Activated CD8-positive, alpha-beta memory T cell treated with anti-CD3 and anti-CD28 coated beads, Interleukin-2, amount 10 ng/mL, durations not matched to agents 7 days and 5 days (primary cell): ENCODE measurements at regions of chr1 and their contacts with region 1.

Region 1: DNA sequence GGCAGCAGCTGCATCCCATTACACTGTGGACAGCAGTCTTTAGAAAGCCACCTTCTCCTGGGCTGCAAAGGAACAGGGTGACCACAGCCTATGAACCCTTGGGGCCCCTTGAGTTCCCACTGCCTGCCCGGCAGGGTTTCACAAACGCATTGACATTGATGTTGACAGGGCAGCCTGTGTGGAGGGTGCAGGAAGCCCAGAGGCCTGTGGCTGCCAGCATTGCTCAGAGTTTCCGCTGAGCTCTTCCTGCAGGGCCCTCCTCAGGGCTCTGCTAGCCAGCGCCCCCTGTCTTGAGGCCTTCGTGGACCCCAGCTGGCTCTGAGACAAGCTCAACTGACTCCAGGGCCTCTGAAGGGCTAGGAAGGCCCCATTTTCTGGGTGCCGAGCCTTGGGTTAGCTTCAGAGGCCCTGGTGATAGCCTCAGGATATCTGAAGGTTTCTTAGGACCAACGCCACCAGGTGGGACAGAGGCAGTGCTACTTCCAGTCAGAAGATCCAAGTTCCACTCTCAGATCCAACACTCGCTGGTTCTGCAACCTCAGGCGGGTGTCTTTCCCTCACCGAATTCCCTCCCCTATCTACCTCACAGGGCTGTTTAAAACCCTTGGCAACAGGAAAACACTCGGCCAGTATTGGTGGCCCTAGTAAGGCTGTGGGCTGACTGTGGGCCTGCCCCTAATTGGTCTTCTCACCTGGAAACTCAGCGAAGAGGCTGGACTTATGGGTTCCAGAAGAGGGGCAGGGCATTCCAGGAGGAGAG is 27.2 kb upstream of the EPS8L3 start:
- DNase-seq: peak; percentile 96
- ATAC-seq: peak; percentile 95
- H3K4me3 Mint-ChIP-seq: peak overlapping the region; percentile 42
- H3K27ac Mint-ChIP-seq: peak overlapping the region; percentile 96
- H3K4me1 Mint-ChIP-seq: peaks cover 94% of the 10 kb centered on the region
- H3K27me3 Mint-ChIP-seq: no peaks in the 10 kb centered on the region

Region 2: GRCh38 chr1:109610609-109611307 is 180.2 kb before region 1 on chr1:
- CTCF ChIA-PET with region 1: no interaction called
- DNase-seq: no peak
- ATAC-seq: no peak
- H3K4me3 Mint-ChIP-seq: no peak overlapping the region
- H3K27ac Mint-ChIP-seq: no peak overlapping the region
- H3K4me1 Mint-ChIP-seq: peaks cover 2% of the 10 kb centered on the region
- H3K27me3 Mint-ChIP-seq: no peaks in the 10 kb centered on the region

Region 3: DNA sequence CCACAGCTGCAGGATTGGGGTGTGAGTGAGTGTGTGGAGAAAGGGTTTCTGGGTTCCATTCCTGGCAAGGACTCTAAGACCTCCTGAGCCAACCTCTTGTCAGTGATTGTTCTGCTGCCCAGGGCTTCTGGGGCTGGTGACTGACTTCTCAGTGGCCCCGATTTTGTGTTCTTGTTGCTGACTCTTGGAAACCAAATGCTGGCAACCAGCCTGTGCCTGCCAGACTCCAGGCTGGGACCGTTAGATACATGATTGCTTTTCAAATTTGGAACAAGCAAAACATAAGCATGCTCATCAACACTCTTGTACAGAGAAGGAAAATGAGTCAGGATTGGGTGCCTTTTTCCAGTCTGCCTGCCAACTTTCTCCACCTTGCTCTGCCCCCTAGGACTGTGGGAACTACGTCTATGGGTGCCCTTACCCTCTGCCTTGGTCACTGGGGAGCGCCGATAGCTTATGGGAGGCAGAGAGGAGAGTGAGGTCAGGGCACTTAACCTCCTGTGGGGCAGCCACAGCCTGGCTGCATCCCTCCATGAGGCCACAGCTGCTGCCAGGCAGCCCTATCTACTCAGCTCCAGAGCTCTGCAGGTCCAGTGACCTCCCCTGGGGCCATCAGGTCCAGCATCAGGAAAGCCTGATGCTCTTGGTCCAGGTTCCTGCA is 12.1 kb after region 1 on chr1:
- CTCF ChIA-PET with region 1: interaction called, 111 read pairs
- DNase-seq: peak; percentile 41
- ATAC-seq: peak; percentile 5
- H3K4me3 Mint-ChIP-seq: peak overlapping the region; percentile 75
- H3K27ac Mint-ChIP-seq: peak overlapping the region; percentile 99
- H3K4me1 Mint-ChIP-seq: peaks cover 91% of the 10 kb centered on the region
- H3K27me3 Mint-ChIP-seq: no peaks in the 10 kb centered on the region

Region 4: DNA sequence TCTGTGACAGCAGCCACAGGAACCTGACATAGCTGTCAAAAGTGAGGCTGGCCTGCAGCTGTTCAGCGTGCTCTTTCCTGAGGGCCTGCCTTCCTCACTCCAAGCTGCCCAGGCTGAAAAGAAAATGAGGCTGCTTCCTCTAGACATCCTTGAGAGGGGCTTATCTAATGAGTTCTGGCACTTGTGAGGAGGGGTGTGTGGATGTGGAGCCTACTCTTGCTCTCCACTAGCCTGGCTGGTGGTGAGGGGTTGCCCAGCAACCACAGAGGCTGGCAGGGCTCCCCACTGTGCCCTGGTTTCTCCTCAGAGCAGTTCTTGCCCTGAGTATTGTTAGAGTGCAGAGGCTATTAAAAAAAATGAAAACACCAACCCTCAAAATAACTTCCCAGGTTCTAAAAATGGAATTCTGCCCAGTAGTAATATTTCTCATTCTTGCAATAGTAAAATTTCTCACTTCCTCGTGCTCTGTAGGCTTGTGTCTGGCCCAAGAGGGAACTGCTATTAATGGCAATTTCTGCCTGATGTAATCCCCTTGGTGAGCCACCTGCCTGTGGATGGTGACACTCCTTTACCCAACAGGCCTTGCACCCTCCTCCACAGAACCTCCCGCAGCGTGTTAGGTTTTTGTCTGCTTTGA is 25.4 kb after region 1 on chr1:
- CTCF ChIA-PET with region 1: interaction called, 35 read pairs
- DNase-seq: peak; percentile 8
- ATAC-seq: no peak
- H3K4me3 Mint-ChIP-seq: no peak overlapping the region
- H3K27ac Mint-ChIP-seq: no peak overlapping the region
- H3K4me1 Mint-ChIP-seq: peaks cover 48% of the 10 kb centered on the region
- H3K27me3 Mint-ChIP-seq: peaks cover 2% of the 10 kb centered on the region

Region 5: GRCh38 chr1:109877320-109877771 is 86.4 kb after region 1 on chr1:
- CTCF ChIA-PET with region 1: no interaction called
- DNase-seq: no peak
- ATAC-seq: no peak
- H3K4me3 Mint-ChIP-seq: no peak overlapping the region
- H3K27ac Mint-ChIP-seq: no peak overlapping the region
- H3K4me1 Mint-ChIP-seq: peaks cover 7% of the 10 kb centered on the region
- H3K27me3 Mint-ChIP-seq: peaks cover 9% of the 10 kb centered on the region

Region 6: GRCh38 chr1:109904105-109904817 is 113.3 kb after region 1 on chr1:
- CTCF ChIA-PET with region 1: interaction called, 23 read pairs
- DNase-seq: no peak
- ATAC-seq: no peak
- H3K4me3 Mint-ChIP-seq: no peak overlapping the region
- H3K27ac Mint-ChIP-seq: no peak overlapping the region
- H3K4me1 Mint-ChIP-seq: peaks cover 50% of the 10 kb centered on the region
- H3K27me3 Mint-ChIP-seq: no peaks in the 10 kb centered on the region

Region 7: GRCh38 chr1:109910123-109910962 is 119.4 kb after region 1 on chr1 and contains the start of gene CSF1:
- CTCF ChIA-PET with region 1: interaction called, 43 read pairs
- DNase-seq: peak; percentile 79
- ATAC-seq: peak; percentile 50
- H3K4me3 Mint-ChIP-seq: peak within 1 kb of the TSS; percentile 91
- H3K27ac Mint-ChIP-seq: peak within 1 kb of the TSS; percentile 91
- H3K4me1 Mint-ChIP-seq: peaks cover 83% of the 10 kb centered on the region
- H3K27me3 Mint-ChIP-seq: no peaks in the 10 kb centered on the region
- total RNA-seq, gene CSF1: 77.6 to 143 TPM